HEK293 (cell line): ENCODE measurements at regions of chr15 and their contacts with region 1.

Region 1: DNA sequence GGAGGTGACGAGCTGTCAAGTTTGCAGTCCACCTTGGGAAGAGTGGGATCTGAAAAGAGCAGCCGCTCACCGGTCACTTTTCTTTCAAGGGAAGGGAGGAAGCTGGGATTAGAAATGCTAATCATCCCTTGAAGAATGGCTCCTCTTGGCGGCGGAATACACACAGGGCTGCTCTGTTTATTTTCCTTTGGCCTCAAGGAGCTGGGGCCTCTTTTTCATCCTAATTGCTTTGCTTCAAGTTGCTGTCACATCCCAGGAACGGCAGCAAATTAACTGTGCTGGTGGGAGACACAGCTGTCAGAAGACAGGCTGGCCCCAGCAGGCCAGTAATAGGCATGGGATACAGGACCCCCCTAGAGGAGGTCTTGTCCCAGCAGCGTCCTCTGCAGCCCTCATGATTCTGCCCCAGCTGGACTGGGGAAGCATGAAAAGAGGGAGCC is 6.7 kb downstream of the KBTBD13 start:
- H3K4me3 ChIP-seq: no peak overlapping the region
- H3K27ac ChIP-seq: no peak overlapping the region
- H3K4me1 ChIP-seq: peaks cover 9% of the 10 kb centered on the region
- CTCF ChIP-seq: 0 out of 2 replicates have a peak, but pooled peaks have one; percentile 30

Region 2: DNA sequence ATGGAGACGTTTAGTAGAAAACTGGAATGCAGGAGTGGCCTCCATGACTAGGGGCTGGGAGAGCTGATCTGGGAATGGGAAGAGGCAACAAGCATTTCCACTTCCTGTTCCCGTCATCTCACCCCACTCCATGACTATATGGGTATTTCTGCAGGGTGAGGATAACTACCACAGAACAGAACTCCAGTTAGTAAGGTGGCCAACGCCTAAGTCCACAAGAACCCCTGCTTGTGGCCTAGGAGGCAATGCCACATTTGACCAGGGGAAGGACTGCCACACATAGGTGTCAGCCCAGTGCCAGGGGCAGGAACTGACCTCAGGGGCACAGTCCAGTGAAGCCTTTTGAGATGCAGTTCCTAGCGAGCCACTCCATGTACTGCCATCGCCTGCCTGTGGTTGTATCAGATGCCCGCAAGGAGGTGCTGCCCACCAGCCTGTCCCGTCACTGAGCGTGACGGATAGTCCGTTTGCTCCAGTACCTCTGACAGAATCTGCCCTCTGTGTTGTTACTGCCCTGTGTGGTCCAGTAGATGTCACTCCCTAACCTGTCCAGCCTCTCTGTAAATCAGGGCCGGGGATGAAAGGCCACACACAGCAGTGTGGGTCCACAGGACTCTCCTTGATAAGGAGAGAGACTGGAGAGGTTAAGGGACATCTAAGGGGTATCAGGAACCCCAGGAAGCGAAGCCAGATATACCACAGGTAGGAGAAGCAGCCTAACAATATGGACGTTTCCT is 50.3 kb before region 1 on chr15:
- CTCF ChIA-PET with region 1: interaction called, 15 read pairs
- POLR2A ChIA-PET with region 1: no interaction called
- H3K4me3 ChIP-seq: no peak overlapping the region
- H3K27ac ChIP-seq: no peak overlapping the region
- H3K4me1 ChIP-seq: no peaks in the 10 kb centered on the region
- CTCF ChIP-seq: peak; percentile 83